ENCODE measurements at regions of chr1 and their contacts with region 1.

Region 1: DNA sequence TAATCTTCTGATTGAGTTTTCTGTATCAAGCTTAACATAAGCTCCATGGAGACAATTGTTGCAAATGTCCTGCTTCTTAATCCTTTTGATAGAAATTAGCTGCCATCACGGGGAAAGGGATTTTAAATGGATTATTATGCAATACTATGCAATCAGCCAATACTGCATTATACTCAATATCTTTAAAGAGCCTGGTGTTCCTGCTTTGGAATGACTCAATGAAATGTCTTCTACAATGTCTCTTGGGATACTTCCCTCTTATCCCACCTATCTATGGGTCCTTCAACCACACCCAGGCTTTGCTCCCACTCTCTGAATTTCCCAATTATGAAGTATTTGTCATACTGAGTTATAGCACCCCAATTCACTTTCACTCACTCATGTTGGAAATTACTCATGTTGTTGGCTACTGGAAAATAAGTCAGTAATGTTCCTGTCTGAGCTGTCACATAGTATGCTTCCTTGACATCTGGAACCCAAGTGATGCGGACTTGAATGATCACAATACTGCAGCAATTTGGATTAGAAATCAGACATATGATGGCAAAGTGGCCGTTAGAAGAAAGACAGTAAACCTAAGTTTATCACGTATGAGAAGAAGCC is 85.0 kb downstream of the TPR start:
- DNase-seq: no peak
- ATAC-seq: no peak
- H3K4me3 ChIP-seq: no peak overlapping the region
- H3K4me3 Mint-ChIP-seq: no peak overlapping the region
- H3K27ac ChIP-seq: no peak overlapping the region
- H3K27ac Mint-ChIP-seq: peak overlapping the region; percentile 89
- H3K4me1 ChIP-seq: peaks cover 39% of the 10 kb centered on the region
- H3K4me1 Mint-ChIP-seq: peaks cover 35% of the 10 kb centered on the region
- H3K27me3 ChIP-seq: no peaks in the 10 kb centered on the region
- H3K27me3 Mint-ChIP-seq: no peaks in the 10 kb centered on the region
- CTCF ChIP-seq: no peak

Region 2: DNA sequence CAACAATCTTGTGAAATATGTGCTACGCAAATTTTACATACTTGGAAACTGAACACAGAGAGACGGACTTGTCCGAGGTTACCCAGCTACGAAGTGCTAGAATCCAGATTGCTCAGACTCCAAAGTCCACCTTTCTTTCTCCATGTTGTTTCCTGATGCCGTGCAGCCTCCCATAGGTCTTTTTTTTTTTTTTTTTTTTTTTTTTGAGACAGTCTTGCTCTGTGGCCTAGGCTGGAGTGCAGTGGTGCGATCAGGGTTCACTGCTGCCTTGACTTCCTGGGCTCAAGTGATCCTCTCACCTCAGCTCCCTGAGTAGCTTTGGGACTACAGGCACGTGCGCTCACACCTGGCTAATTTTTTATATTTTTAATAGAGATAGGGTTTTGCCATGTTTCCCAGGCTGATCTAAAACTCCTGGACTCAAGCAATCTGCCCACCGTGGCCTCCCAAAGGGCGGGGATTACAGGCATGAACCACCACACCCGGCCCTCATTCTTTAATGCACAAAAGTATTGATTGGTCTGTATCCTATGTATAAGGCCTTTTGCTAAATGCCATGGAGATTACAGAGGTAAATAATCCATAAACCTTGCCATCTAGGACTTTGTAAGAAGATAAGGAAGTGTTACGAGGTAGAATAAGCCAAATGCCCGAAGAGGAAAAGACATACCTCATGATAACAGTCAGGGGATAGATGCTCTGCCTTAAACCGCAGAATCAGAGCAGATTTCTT is 1810.4 kb before region 1 on chr1:
- CTCF ChIA-PET with region 1: no interaction called
- POLR2A ChIA-PET with region 1: no interaction called
- intact Hi-C with region 1: loop called in 1 of 2 experiments (anchors 5 kb)
- DNase-seq: no peak
- ATAC-seq: no peak
- H3K4me3 ChIP-seq: no peak overlapping the region
- H3K4me3 Mint-ChIP-seq: no peak overlapping the region
- H3K27ac ChIP-seq: no peak overlapping the region
- H3K27ac Mint-ChIP-seq: no peak overlapping the region
- H3K4me1 ChIP-seq: no peaks in the 10 kb centered on the region
- H3K4me1 Mint-ChIP-seq: no peaks in the 10 kb centered on the region
- H3K27me3 ChIP-seq: no peaks in the 10 kb centered on the region
- H3K27me3 Mint-ChIP-seq: no peaks in the 10 kb centered on the region
- CTCF ChIP-seq: no peak

Region 3: DNA sequence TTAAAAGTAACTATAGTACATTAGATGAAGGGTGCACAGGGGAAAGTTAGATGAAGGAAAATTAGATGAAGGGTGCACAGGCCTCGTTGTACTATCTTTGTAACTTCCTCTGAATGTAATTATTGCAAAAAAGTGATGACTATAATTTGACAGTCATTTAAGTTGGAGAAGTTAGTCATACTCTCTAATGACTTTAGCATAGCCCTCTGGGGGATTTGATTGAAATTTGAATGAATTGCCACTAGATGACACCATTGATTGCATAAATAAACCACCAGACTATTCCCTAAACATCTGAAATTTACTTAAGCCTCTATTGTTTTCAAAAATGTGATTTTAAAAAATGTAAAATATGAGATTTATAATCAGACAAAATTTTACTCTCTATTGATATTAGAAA is 17.6 kb before region 1 on chr1:
- CTCF ChIA-PET with region 1: no interaction called
- POLR2A ChIA-PET with region 1: interaction called, 4 read pairs
- intact Hi-C with region 1: loop called in 1 of 2 experiments (anchors 2 kb)
- DNase-seq: peak in 2 of 9 experiments; percentile 11 to 27
- ATAC-seq: peak; percentile 38
- H3K4me3 ChIP-seq: no peak overlapping the region
- H3K4me3 Mint-ChIP-seq: no peak overlapping the region
- H3K27ac ChIP-seq: no peak overlapping the region
- H3K27ac Mint-ChIP-seq: no peak overlapping the region
- H3K4me1 ChIP-seq: no peaks in the 10 kb centered on the region
- H3K4me1 Mint-ChIP-seq: peaks cover 2% of the 10 kb centered on the region
- H3K27me3 ChIP-seq: no peaks in the 10 kb centered on the region
- H3K27me3 Mint-ChIP-seq: peaks cover 6% of the 10 kb centered on the region
- CTCF ChIP-seq: peak; percentile 45

Region 4: GRCh38 chr1:186304982-186305949 is 15.2 kb after region 1 on chr1:
- CTCF ChIA-PET with region 1: interaction called, 9 read pairs
- POLR2A ChIA-PET with region 1: interaction called, 4 read pairs
- intact Hi-C with region 1: loop called in 1 of 2 experiments (anchors 2 kb)
- DNase-seq: peak in 2 of 9 experiments; percentile 45 to 60
- ATAC-seq: peak; percentile 37
- H3K4me3 ChIP-seq: no peak overlapping the region
- H3K4me3 Mint-ChIP-seq: no peak overlapping the region
- H3K27ac ChIP-seq: peak overlapping the region in 1 of 2 experiments; percentile 10
- H3K27ac Mint-ChIP-seq: peak overlapping the region; percentile 93
- H3K4me1 ChIP-seq: peaks cover 50% of the 10 kb centered on the region
- H3K4me1 Mint-ChIP-seq: peaks cover 49% of the 10 kb centered on the region
- H3K27me3 ChIP-seq: no peaks in the 10 kb centered on the region
- H3K27me3 Mint-ChIP-seq: no peaks in the 10 kb centered on the region
- CTCF ChIP-seq: peak; percentile 74

Region 5: DNA sequence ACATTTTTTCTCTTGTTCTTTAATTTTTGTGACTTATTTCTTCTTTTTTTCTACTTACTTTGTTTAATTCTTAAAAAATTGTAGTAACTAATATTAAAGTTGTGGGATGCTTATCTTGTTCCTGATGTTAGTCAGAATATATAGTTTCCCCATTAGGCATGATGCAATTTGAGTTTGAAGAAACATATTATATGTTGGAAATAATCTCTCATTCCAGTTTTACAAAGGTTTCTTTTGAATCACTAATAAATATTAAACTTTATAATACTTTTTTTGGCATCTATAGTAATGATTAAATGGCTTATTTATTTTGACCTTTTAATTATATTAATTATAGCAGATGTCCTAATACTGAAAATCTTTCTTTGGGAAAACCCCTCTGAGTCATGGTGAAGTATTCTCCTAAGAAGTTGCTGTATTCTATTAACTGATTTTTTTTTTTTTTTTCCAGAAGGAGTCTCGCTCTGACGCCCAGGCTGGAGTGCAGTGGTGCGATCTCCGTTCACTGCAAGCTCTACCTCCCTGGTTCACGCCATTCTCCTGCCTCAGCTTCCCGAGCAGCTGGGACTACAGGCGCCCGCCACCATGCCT is 418.7 kb after region 1 on chr1:
- CTCF ChIA-PET with region 1: no interaction called
- POLR2A ChIA-PET with region 1: no interaction called
- intact Hi-C with region 1: no loop called
- DNase-seq: no peak
- ATAC-seq: no peak
- H3K4me3 ChIP-seq: no peak overlapping the region
- H3K4me3 Mint-ChIP-seq: no peak overlapping the region
- H3K27ac ChIP-seq: no peak overlapping the region
- H3K27ac Mint-ChIP-seq: no peak overlapping the region
- H3K4me1 ChIP-seq: no peaks in the 10 kb centered on the region
- H3K4me1 Mint-ChIP-seq: no peaks in the 10 kb centered on the region
- H3K27me3 ChIP-seq: no peaks in the 10 kb centered on the region
- H3K27me3 Mint-ChIP-seq: no peaks in the 10 kb centered on the region
- CTCF ChIP-seq: no peak